ENCODE measurements at regions of chr2 and their contacts with region 1.

Region 1: DNA sequence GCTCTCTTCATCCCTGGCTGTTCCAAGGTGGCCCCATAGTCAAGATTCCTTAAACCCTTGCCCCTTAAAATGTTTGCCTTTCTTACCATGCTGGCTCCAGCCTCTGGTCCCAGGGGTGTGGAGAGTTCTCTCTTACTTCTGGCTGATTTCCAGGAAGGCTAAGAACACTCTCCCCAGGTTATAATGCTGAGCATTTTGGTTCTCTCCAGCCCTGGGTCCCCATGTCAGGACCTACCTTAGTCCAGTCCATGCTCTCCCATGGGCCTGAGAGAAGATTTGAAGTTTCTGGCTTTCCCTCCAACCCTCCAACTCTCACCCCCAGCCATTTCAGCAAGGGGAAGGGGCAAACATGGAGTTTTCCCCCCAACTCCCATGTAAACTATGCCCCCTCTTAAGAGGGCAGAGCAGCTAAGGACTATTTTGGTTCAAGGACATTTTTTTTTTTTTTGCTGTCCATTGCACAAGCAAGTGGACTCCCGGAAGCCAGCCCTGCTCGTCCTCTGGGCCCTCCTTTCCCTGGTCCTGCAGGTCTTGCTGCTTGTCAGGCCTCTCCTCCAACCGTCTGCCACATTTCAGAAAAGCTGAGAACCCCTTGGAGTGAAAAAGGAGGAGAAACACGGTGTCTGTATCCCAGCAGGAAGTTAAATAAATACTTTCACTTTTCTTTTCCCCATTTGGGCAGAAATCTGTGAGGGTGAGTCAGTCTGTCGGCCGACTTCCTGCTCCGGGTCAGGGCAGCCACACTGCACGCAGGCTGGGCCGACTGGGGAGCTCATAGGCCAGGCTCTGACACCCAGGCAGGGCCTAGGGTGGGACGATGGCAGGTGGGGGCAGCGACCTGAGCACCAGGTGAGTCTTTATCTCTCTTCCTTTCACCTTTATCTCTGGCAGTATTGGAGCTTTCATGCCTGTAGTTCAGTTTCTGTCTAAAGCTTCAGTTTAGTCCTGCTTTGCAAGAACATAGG is at the start of gene SP140L:
- DNase-seq: peak; percentile 86
- H3K4me3 ChIP-seq: peak within 1 kb of the TSS; percentile 34 to 89 (median 61)
- H3K27ac ChIP-seq: peak within 1 kb of the TSS; percentile 66
- H3K4me1 ChIP-seq: peaks cover 17% of the 10 kb centered on the region
- H3K27me3 ChIP-seq: no peaks in the 10 kb centered on the region
- CTCF ChIP-seq: no peak
- POLR2A ChIP-seq: peak; percentile 21
- total RNA-seq, gene SP140L: 21.4 and 27.3 TPM in 2 replicates

Region 2: GRCh38 chr2:230219419-230220331 is 107.1 kb before region 1 on chr2 and contains the start of gene SP110:
- CTCF ChIA-PET with region 1: no interaction called
- POLR2A ChIA-PET with region 1: no interaction called
- dilution Hi-C with region 1: no loop called
- intact Hi-C with region 1: loop called (anchors 5 kb)
- DNase-seq: peak; percentile 81
- H3K4me3 ChIP-seq: peak within 1 kb of the TSS; percentile 60 to 85 (median 70)
- H3K27ac ChIP-seq: peak within 1 kb of the TSS; percentile 11
- H3K4me1 ChIP-seq: peaks cover 6% of the 10 kb centered on the region
- H3K27me3 ChIP-seq: no peaks in the 10 kb centered on the region
- CTCF ChIP-seq: no peak
- POLR2A ChIP-seq: peak; percentile 47
- total RNA-seq, gene SP110: 10.7 and 11.6 TPM in 2 replicates